T-cell (primary cell): ENCODE measurements at regions of chr5 and their contacts with region 1.

Region 1: GRCh38 chr5:141636413-141637122 is at the starts of genes HDAC3 and RELL2:
- DNase-seq: peak; percentile 78 to 97 (median 90)
- ATAC-seq: peak; percentile 81 to 93 (median 89)
- H3K4me3 ChIP-seq: peak within 1 kb of the TSS; percentile 90 to 99
- H3K4me3 Mint-ChIP-seq: peak within 1 kb of the TSS; percentile 84 to 92 (median 91)
- H3K27ac ChIP-seq: peak within 1 kb of the TSS; percentile 79
- H3K27ac Mint-ChIP-seq: peak within 1 kb of the TSS; percentile 87 to 93
- H3K4me1 ChIP-seq: peaks cover 7 to 40% of the 10 kb centered on the region in 2 experiments
- H3K4me1 Mint-ChIP-seq: peaks cover 40 to 48% (median 44%) of the 10 kb centered on the region in 3 donors
- H3K27me3 ChIP-seq: no peaks in the 10 kb centered on the region
- H3K27me3 Mint-ChIP-seq: no peaks in the 10 kb centered on the region
- total RNA-seq, gene HDAC3: 68.5 to 78.5 (median 73.8) TPM
- total RNA-seq, gene RELL2: 15.3 to 30.7 (median 26.0) TPM

Region 2: GRCh38 chr5:141573489-141574121 is 63.0 kb before region 1 on chr5:
- CTCF ChIA-PET with region 1: no interaction called
- POLR2A ChIA-PET with region 1: no interaction called
- DNase-seq: no peak
- ATAC-seq: no peak
- H3K4me3 ChIP-seq: no peak overlapping the region
- H3K4me3 Mint-ChIP-seq: no peak overlapping the region
- H3K27ac ChIP-seq: no peak overlapping the region
- H3K27ac Mint-ChIP-seq: no peak overlapping the region
- H3K4me1 ChIP-seq: no peaks in the 10 kb centered on the region
- H3K4me1 Mint-ChIP-seq: peaks cover 0 to 2% (median 0%) of the 10 kb centered on the region in 3 donors
- H3K27me3 ChIP-seq: no peaks in the 10 kb centered on the region
- H3K27me3 Mint-ChIP-seq: no peaks in the 10 kb centered on the region

Region 3: GRCh38 chr5:141650851-141651727 is 14.5 kb after region 1 on chr5 and contains the start of gene FCHSD1:
- CTCF ChIA-PET with region 1: interaction called in 1 of 2 experiments, 16 read pairs
- POLR2A ChIA-PET with region 1: interaction called, 3 to 4 read pairs
- DNase-seq: peak; percentile 35 to 84 (median 68)
- ATAC-seq: peak; percentile 92 to 94 (median 92)
- H3K4me3 ChIP-seq: peak within 1 kb of the TSS; percentile 54 to 80
- H3K4me3 Mint-ChIP-seq: peak within 1 kb of the TSS; percentile 86 to 93 (median 91)
- H3K27ac ChIP-seq: peak within 1 kb of the TSS; percentile 78
- H3K27ac Mint-ChIP-seq: peak within 1 kb of the TSS; percentile 94 to 97
- H3K4me1 ChIP-seq: peaks cover 3 to 31% of the 10 kb centered on the region in 2 experiments
- H3K4me1 Mint-ChIP-seq: peaks cover 30 to 50% (median 46%) of the 10 kb centered on the region in 3 donors
- H3K27me3 ChIP-seq: peaks cover 0 to 9% of the 10 kb centered on the region in 2 experiments
- H3K27me3 Mint-ChIP-seq: no peaks in the 10 kb centered on the region
- total RNA-seq, gene FCHSD1: 68.5 to 103 (median 101) TPM